ENCODE measurements at regions of chr11 and their contacts with region 1.

Region 1: GRCh38 chr11:65817835-65818742 is 15.7 kb upstream of the SNX32 start:
- DNase-seq: peak; percentile 99
- H3K4me3 ChIP-seq: peak overlapping the region; percentile 43 to 91 (median 66)
- H3K27ac ChIP-seq: peak overlapping the region; percentile 69 to 91 (median 85)
- H3K4me1 ChIP-seq: peaks cover 4 to 31% (median 21%) of the 10 kb centered on the region in 6 donors
- H3K27me3 ChIP-seq: no peaks in the 10 kb centered on the region
- CTCF ChIP-seq: peak; percentile 89 to 100 (median 100)
- POLR2A ChIP-seq: no peak

Region 2: GRCh38 chr11:65588199-65589054 is 229.7 kb before region 1 on chr11:
- intact Hi-C with region 1: no loop called
- DNase-seq: peak; percentile 92
- H3K4me3 ChIP-seq: peak overlapping the region in 3 of 8 donors; percentile 3 to 35 (median 14)
- H3K27ac ChIP-seq: peak overlapping the region; percentile 65 to 92 (median 82)
- H3K4me1 ChIP-seq: peaks cover 50 to 96% (median 74%) of the 10 kb centered on the region in 6 donors
- H3K27me3 ChIP-seq: no peaks in the 10 kb centered on the region
- CTCF ChIP-seq: peak; percentile 73 to 89 (median 83)
- POLR2A ChIP-seq: no peak

Region 3: DNA sequence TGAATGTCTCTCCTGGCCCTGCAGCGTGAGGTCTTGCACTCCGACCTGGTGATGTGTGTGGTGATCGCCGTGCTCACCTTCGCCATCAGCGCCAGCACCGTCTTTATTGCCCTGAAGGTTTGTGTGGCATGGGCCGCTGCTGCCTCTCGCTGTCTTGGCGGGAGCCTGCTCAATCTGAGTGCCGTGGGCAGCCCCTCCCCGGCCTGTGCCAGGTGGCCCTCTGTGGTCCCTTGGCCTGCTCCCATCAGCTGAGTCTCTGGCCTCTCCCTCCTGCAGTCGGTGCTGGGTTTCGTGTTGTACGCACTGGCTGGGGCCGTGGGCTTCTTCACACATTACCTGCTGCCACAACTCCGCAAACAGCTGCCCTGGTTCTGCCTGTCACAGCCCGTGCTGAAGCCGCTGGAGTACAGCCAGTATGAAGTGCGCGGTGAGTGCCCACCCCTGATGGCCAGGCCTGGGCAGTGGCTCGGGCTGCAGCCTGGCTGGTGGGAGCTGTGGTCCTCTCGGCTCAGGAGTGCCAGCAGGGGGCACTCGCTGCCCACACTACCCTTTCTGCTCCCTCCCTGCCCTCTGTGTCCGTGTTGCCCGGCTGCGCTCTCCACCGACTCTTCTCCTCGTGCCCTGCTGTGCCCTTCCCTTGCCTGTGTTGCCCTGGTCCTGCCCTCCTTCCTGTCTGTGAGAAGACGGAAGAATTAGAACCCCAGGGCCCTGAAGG is 192.3 kb before region 1 on chr11:
- intact Hi-C with region 1: loop called (anchors 5 kb)
- DNase-seq: peak; percentile 93
- H3K4me3 ChIP-seq: no peak overlapping the region
- H3K27ac ChIP-seq: peak overlapping the region in 3 of 8 donors; percentile 43 to 59 (median 55)
- H3K4me1 ChIP-seq: peaks cover 0 to 29% (median 11%) of the 10 kb centered on the region in 6 donors
- H3K27me3 ChIP-seq: no peaks in the 10 kb centered on the region
- CTCF ChIP-seq: peak; percentile 82 to 92 (median 87)
- POLR2A ChIP-seq: no peak

Region 4: DNA sequence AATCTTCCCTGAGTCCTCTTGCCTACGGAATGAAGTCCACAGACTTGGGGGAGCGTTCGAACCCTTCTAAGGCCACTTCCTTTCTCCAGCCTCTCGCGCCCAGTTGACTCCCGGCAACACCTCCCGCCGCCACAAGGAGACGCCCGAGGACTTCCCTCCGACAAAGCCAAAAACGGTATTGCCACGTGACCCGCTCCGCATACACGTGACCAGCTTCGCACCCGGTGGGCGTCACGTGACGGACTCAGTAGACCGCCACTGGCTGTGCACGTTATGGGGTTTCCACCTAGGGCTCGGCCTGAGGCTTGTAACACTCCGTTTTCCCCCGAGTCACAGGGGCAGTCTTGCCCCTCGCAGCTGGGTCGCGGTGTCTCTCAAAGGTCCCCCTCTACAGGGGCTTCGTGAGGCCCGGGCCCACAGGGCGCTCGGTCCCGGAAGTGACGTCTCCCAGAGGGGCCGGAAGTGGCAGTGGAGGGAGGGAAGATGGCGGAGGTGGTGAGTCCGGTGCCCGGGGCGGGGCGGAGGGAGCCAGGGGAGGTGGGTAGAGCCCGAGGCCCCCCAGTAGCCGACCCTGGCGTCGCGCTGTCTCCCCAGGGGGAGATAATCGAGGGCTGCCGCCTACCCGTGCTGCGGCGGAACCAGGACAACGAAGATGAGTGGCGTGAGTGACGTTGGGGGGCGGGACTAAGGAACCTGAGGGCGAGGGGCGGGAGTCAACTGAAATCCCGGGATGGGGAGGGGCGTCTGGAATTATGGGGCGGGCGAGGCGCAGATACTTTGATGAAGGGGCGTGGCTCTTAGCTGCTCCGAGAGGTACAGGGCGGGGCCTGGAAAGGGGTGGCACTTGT is 106.1 kb before region 1 on chr11 and contains the start of gene KAT5:
- intact Hi-C with region 1: loop called (anchors 10 kb)
- DNase-seq: peak; percentile 99
- H3K4me3 ChIP-seq: peak within 1 kb of the TSS; percentile 35 to 76 (median 66)
- H3K27ac ChIP-seq: peak within 1 kb of the TSS; percentile 89 to 100 (median 100)
- H3K4me1 ChIP-seq: peaks cover 9 to 57% (median 27%) of the 10 kb centered on the region in 6 donors
- H3K27me3 ChIP-seq: no peaks in the 10 kb centered on the region
- CTCF ChIP-seq: peak; percentile 95 to 100 (median 97)
- POLR2A ChIP-seq: peak in 2 of 3 donors; percentile 55 to 58
- total RNA-seq, gene KAT5: 55.0 to 85.8 (median 63.6) TPM

Region 5: DNA sequence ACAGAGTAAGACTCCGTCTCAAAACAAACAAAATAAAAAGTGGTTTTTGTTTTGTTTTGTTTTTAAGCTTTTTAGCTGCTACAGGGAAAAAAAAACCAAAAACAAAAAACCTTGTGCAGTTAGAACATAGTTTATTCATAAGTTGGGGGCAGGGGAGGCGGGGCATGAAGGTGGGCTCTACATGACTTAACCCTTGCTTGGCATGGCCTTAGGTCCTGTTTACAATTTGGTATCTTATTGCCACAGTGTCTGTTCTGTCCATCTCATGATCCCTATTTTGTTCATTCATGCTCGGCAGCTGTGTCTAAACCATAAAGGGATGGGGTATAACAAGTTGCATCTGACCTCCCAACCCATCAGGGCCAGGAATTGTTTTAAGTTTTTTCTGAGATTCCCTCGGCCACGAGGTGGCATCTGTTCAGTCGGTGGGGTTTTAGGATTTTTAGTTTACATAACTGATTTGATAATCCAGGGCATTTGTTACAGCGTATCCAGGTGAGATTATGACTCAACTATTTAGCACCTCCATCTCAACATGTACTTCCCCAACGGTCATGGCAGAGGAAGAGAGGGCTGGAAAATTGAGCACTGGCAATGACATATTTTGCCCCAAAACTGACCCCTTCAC is 44.2 kb before region 1 on chr11:
- intact Hi-C with region 1: loop called (anchors 5 kb)
- DNase-seq: no peak
- H3K4me3 ChIP-seq: peak overlapping the region in 1 of 8 donors; percentile 97
- H3K27ac ChIP-seq: peak overlapping the region in 6 of 8 donors; percentile 88 to 97 (median 92)
- H3K4me1 ChIP-seq: peaks cover 0 to 79% (median 41%) of the 10 kb centered on the region in 6 donors
- H3K27me3 ChIP-seq: no peaks in the 10 kb centered on the region
- CTCF ChIP-seq: no peak
- POLR2A ChIP-seq: no peak

Region 6: GRCh38 chr11:65873318-65874156 is 55.4 kb after region 1 on chr11:
- intact Hi-C with region 1: no loop called
- DNase-seq: peak; percentile 98
- H3K4me3 ChIP-seq: peak overlapping the region; percentile 30 to 77 (median 47)
- H3K27ac ChIP-seq: peak overlapping the region; percentile 63 to 91 (median 83)
- H3K4me1 ChIP-seq: peaks cover 16 to 58% (median 45%) of the 10 kb centered on the region in 6 donors
- H3K27me3 ChIP-seq: peaks cover 0 to 11% (median 0%) of the 10 kb centered on the region in 7 donors
- CTCF ChIP-seq: peak in 2 of 11 experiments; percentile 8 to 51
- POLR2A ChIP-seq: peak in 1 of 3 donors; percentile 43